Sigmoid colon (tissue), 7 donors: ENCODE measurements at regions of chr15 and their contacts with region 1.

Region 1: GRCh38 chr15:23642413-23643044 is 5.1 kb downstream of the MAGEL2 start:
- DNase-seq: peak; percentile 70
- H3K4me3 ChIP-seq: no peak overlapping the region
- H3K27ac ChIP-seq: no peak overlapping the region
- H3K4me1 ChIP-seq: peaks cover 0 to 6% (median 0%) of the 10 kb centered on the region in 4 donors
- H3K27me3 ChIP-seq: peaks cover 3 to 19% (median 13%) of the 10 kb centered on the region in 3 donors
- CTCF ChIP-seq: peak; percentile 39 to 79 (median 60)
- EP300 ChIP-seq: no peak
- POLR2A ChIP-seq: no peak

Region 2: DNA sequence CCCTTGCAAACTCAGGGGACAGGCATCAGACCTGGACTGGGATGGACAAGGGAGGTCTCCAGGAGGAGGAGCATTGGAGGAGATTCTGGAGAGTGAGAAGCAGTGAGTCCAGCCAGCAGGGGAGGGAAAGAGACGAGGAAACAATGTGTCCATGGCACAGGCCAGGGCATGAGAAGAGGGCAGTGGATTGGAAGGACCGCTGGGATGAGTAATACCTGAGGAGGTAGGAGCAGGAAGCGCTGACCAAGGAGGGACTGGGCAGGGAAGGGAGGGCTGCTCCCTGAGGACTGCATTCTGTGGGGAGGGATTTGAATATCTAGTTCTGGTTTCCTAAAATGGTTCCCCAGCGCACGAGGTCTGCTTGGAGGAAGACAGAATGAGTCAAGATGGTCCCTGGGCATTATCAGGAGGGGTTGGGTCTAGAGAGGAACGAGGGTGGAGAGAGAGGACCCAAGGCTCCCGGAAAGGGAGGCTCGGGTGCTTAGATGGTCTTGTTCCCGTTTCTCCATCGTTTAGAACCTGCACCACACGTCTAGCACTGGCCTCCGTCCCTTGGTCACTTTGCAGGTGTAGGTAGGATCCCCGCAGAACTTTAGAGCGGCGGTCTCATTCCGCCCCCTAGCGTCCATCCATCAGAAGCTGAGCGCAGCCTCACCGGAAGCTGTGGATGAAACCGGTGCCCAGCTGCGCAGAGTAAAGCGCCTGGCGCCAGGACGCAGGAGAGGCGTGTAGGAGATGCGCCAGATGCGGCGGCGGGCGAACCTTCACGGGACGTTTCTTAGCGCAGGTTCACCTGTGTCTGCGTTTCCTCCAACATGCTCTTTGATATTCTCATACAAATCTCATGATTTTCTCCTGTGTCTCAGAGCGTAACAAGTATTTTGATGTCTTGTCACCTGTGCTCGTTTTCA is 235.2 kb after region 1 on chr15:
- intact Hi-C with region 1: loop called (anchors 5 kb)
- DNase-seq: no peak
- H3K4me3 ChIP-seq: no peak overlapping the region
- H3K27ac ChIP-seq: no peak overlapping the region
- H3K4me1 ChIP-seq: no peaks in the 10 kb centered on the region
- H3K27me3 ChIP-seq: peaks cover 0 to 5% (median 0%) of the 10 kb centered on the region in 3 donors
- CTCF ChIP-seq: peak in 1 of 4 experiments; percentile 26
- EP300 ChIP-seq: no peak
- POLR2A ChIP-seq: no peak